Activated CD4-positive, alpha-beta T cell treated with anti-CD3 and anti-CD28 coated beads for 36 hours (primary cell): ENCODE measurements at regions of chr17 and their contacts with region 1.

Region 1: GRCh38 chr17:46794318-46794717 is 24.2 kb downstream of the WNT3 start:
- DNase-seq: no peak
- ATAC-seq: no peak
- H3K4me3 Mint-ChIP-seq: no peak overlapping the region
- H3K27ac Mint-ChIP-seq: no peak overlapping the region
- H3K4me1 Mint-ChIP-seq: no peaks in the 10 kb centered on the region
- H3K27me3 Mint-ChIP-seq: peaks cover 10% of the 10 kb centered on the region

Region 2: DNA sequence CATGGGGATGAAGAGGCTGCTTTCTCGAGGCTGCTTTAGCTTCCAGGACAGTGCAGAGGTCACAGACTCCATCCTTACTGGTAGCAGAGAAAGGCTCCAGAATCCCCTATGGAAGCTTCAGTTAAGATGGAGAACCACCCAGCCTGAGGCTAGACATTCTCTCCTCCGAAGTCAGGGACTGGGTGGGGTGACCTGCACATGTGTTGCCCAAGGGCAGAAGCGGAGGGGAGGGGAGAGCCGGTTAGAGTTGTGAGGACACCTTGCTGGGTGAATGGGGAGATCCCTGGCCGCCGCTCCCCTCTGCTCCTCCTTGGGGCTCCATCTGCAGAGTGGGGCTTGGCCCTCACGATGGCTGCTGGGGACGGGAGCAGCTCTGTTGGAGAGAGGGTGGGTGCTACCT is 12.2 kb after region 1 on chr17:
- CTCF ChIA-PET with region 1: no interaction called
- POLR2A ChIA-PET with region 1: no interaction called
- intact Hi-C with region 1: loop called in 1 of 2 experiments (anchors 2 kb)
- DNase-seq: no peak
- ATAC-seq: no peak
- H3K4me3 Mint-ChIP-seq: no peak overlapping the region
- H3K27ac Mint-ChIP-seq: no peak overlapping the region
- H3K4me1 Mint-ChIP-seq: no peaks in the 10 kb centered on the region
- H3K27me3 Mint-ChIP-seq: no peaks in the 10 kb centered on the region